Psoas muscle (tissue), 8 donors: ENCODE measurements at regions of chr12 and their contacts with region 1.

Region 1: GRCh38 chr12:89073027-89073398 is 279.3 kb downstream of the DUSP6 start:
- DNase-seq: no peak
- ATAC-seq: no peak
- H3K4me3 ChIP-seq: no peak overlapping the region
- H3K27ac ChIP-seq: no peak overlapping the region
- H3K4me1 ChIP-seq: no peaks in the 10 kb centered on the region
- H3K27me3 ChIP-seq: no peaks in the 10 kb centered on the region
- CTCF ChIP-seq: no peak

Region 2: DNA sequence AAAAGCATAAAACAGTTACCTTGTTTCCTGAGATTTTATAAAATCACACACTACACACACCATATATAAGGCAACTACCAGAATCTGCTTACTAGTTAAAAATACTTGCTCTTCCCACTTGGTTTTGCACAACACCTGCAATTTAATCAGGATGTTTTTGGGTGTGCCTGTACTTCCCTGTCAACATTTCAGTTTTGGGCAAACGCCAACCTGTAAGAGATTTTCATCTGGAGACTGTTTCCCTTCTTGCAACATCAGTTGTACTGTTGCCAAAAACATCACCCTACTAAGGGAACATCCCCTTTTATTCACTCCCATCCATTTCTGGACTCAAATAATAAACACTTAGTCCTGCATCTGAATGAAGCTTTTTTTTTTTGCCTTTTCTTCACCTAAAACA is 107.0 kb after region 1 on chr12:
- intact Hi-C with region 1: loop called in 1 of 2 experiments (anchors 10 kb)
- DNase-seq: no peak
- ATAC-seq: peak in 2 of 4 donors; percentile 34 to 77
- H3K4me3 ChIP-seq: no peak overlapping the region
- H3K27ac ChIP-seq: no peak overlapping the region
- H3K4me1 ChIP-seq: no peaks in the 10 kb centered on the region
- H3K27me3 ChIP-seq: no peaks in the 10 kb centered on the region
- CTCF ChIP-seq: no peak